AG04449 (cell line): ENCODE measurements at regions of chr1 and their contacts with region 1.

Region 1: DNA sequence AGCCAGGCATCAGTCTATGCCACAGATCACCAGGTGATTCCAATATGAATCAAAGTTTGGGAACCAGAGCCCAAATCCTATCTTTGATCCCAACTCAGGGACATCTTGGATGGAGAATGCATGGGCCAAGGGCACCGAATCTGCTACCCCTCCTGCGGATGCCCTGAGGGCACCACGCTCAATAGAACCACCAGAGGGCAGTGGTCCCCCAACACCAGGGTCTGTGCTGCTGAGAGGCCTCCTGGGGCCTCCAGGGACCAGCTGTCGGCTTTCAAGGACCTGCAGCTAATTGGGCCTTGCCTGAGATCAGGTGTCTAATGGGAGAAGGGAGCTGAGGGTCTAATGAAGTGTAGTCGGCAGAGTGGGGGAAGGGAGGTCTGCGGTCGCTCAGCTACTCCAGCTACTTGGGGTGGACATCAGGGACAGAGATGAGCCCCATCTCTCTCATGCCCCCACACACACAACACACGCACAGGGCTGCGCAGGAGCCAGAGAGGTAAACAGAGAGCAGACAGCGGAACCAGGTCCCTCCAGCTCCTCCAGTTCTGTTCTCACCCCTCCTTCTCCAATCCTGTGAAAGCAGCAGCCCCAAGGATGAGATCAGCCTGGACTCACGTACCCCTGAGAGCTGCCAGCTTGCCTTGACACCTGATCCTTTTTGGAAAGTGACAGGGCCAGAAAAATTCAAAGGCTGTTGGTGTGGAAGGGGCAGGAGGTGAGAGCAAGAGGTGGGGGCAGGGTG is 34.9 kb upstream of the PPP1R15B start:
- DNase-seq: no peak
- H3K4me3 ChIP-seq: no peak overlapping the region
- CTCF ChIP-seq: peak; percentile 85

Region 2: DNA sequence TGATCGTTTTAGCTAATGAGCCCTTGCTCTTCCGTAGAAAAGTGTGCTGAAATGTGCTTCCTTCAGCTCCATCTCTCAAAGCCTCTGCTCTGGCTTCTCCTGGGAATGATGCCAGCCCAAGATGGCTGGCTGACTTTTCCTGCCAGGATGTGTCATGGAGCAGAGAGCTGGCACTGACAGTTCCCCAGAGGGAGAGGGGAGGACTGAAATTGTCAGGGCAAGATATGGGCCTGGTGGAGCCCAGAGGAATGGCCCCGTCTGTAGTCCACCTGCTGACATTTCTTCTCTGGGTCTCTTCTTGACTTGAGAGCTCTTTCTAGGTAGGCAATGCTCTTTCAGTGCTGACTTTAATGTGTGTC is 61.6 kb before region 1 on chr1:
- CTCF ChIA-PET with region 1: no interaction called
- POLR2A ChIA-PET with region 1: no interaction called
- DNase-seq: no peak
- H3K4me3 ChIP-seq: no peak overlapping the region
- CTCF ChIP-seq: no peak

Region 3: GRCh38 chr1:204411451-204412204 is 34.9 kb before region 1 on chr1 and contains the start of gene PPP1R15B:
- CTCF ChIA-PET with region 1: interaction called, 13 read pairs
- POLR2A ChIA-PET with region 1: no interaction called
- DNase-seq: peak; percentile 93
- H3K4me3 ChIP-seq: peak within 1 kb of the TSS; percentile 73
- CTCF ChIP-seq: no peak

Region 4: GRCh38 chr1:204431310-204432165 is 15.0 kb before region 1 on chr1:
- CTCF ChIA-PET with region 1: interaction called, 369 read pairs
- POLR2A ChIA-PET with region 1: no interaction called
- DNase-seq: peak; percentile 46
- H3K4me3 ChIP-seq: no peak overlapping the region
- CTCF ChIP-seq: peak; percentile 85

Region 5: GRCh38 chr1:204465546-204466415 is 19.2 kb after region 1 on chr1:
- CTCF ChIA-PET with region 1: interaction called, 115 read pairs
- POLR2A ChIA-PET with region 1: no interaction called
- DNase-seq: no peak
- H3K4me3 ChIP-seq: no peak overlapping the region
- CTCF ChIP-seq: no peak

Region 6: GRCh38 chr1:204480515-204480914 is 34.0 kb after region 1 on chr1:
- CTCF ChIA-PET with region 1: interaction called, 56 read pairs
- POLR2A ChIA-PET with region 1: no interaction called
- DNase-seq: no peak
- H3K4me3 ChIP-seq: no peak overlapping the region
- CTCF ChIP-seq: no peak

Region 7: GRCh38 chr1:204487256-204487615 is 40.7 kb after region 1 on chr1:
- CTCF ChIA-PET with region 1: interaction called, 1,052 read pairs
- POLR2A ChIA-PET with region 1: no interaction called
- DNase-seq: no peak
- H3K4me3 ChIP-seq: no peak overlapping the region
- CTCF ChIP-seq: no peak

Region 8: GRCh38 chr1:204494281-204495077 is 47.9 kb after region 1 on chr1 and contains the start of gene PIK3C2B:
- CTCF ChIA-PET with region 1: interaction called, 1,052 read pairs
- POLR2A ChIA-PET with region 1: interaction called, 3 read pairs
- DNase-seq: no peak
- H3K4me3 ChIP-seq: peak within 1 kb of the TSS; percentile 94
- CTCF ChIP-seq: peak; percentile 73